CD4-positive, alpha-beta memory T cell (primary cell): ENCODE measurements at regions of chr14 and their contacts with region 1.

Region 1: GRCh38 chr14:76050797-76051392 is 65.3 kb downstream of the IFT43 start:
- DNase-seq: peak in 4 of 5 donors; percentile 36 to 56 (median 49)
- H3K4me3 ChIP-seq: no peak overlapping the region
- H3K4me3 Mint-ChIP-seq: no peak overlapping the region
- H3K27ac ChIP-seq: no peak overlapping the region
- H3K27ac Mint-ChIP-seq: no peak overlapping the region
- H3K4me1 ChIP-seq: no peaks in the 10 kb centered on the region
- H3K4me1 Mint-ChIP-seq: peaks cover 0 to 2% (median 0%) of the 10 kb centered on the region in 4 donors
- H3K27me3 ChIP-seq: no peaks in the 10 kb centered on the region
- H3K27me3 Mint-ChIP-seq: no peaks in the 10 kb centered on the region

Region 2: DNA sequence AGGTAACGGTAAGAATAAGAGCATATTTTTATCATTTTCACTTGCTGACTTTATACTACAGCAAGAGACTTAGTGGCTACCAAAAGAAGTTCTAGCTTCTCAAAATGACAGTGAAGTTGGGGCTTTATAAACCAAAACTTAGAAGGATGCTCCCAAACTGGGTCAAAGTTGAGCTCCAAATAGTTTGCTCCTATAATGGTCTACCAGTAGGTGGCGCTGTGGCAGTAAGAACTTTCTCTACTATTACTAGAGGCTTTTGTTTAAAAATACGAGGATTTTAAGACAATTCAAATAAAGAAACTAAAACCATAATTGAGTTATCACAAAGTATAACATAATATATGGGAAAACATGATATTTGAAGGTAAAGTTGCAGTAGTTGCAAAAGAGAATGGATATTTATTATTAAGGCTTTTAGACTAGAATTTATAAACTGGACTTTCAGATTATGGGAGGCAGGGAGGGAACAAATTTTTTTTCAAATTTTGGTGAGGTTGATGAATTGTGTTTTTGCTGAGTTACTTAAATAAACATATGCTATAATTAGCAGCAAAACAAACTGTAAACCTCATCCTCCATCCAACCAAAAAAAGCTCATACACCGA is 144.1 kb before region 1 on chr14:
- CTCF ChIA-PET with region 1: no interaction called
- POLR2A ChIA-PET with region 1: no interaction called
- intact Hi-C with region 1: loop called (anchors 5 kb)
- DNase-seq: peak; percentile 48 to 64 (median 54)
- H3K4me3 ChIP-seq: no peak overlapping the region
- H3K4me3 Mint-ChIP-seq: no peak overlapping the region
- H3K27ac ChIP-seq: no peak overlapping the region
- H3K27ac Mint-ChIP-seq: peak overlapping the region in 2 of 7 donors; percentile 3 to 15
- H3K4me1 ChIP-seq: no peaks in the 10 kb centered on the region
- H3K4me1 Mint-ChIP-seq: no peaks in the 10 kb centered on the region
- H3K27me3 ChIP-seq: no peaks in the 10 kb centered on the region
- H3K27me3 Mint-ChIP-seq: no peaks in the 10 kb centered on the region

Region 3: DNA sequence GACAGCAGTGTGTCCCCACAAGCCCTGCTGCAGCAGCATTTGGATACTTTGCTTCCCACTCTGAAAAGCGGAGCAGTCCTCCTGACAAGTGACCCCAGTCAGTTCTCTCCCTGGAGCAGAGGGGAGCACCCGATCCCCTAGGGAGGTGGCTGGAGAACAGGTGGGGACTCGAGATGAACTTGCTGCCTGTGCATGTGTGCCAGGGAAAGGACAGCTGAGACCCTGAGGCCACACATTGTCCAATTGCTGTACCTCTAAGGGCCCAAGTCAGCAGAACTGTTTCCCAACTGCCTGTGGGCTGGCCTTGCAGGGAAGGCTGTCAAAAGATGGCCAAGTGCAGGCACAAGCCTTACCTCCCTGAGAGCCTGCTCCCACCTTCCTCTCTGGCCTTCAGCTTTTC is 10.2 kb before region 1 on chr14:
- CTCF ChIA-PET with region 1: interaction called, 10 read pairs
- POLR2A ChIA-PET with region 1: no interaction called
- intact Hi-C with region 1: no loop called
- DNase-seq: no peak
- H3K4me3 ChIP-seq: no peak overlapping the region
- H3K4me3 Mint-ChIP-seq: no peak overlapping the region
- H3K27ac ChIP-seq: no peak overlapping the region
- H3K27ac Mint-ChIP-seq: no peak overlapping the region
- H3K4me1 ChIP-seq: no peaks in the 10 kb centered on the region
- H3K4me1 Mint-ChIP-seq: no peaks in the 10 kb centered on the region
- H3K27me3 ChIP-seq: no peaks in the 10 kb centered on the region
- H3K27me3 Mint-ChIP-seq: no peaks in the 10 kb centered on the region

Region 4: GRCh38 chr14:76181546-76181945 is 130.7 kb after region 1 on chr14:
- CTCF ChIA-PET with region 1: interaction called, 10 read pairs
- POLR2A ChIA-PET with region 1: no interaction called
- intact Hi-C with region 1: no loop called
- DNase-seq: peak in 1 of 5 donors; percentile 2
- H3K4me3 ChIP-seq: no peak overlapping the region
- H3K4me3 Mint-ChIP-seq: no peak overlapping the region
- H3K27ac ChIP-seq: no peak overlapping the region
- H3K27ac Mint-ChIP-seq: no peak overlapping the region
- H3K4me1 ChIP-seq: no peaks in the 10 kb centered on the region
- H3K4me1 Mint-ChIP-seq: peaks cover 7 to 13% (median 8%) of the 10 kb centered on the region in 4 donors
- H3K27me3 ChIP-seq: no peaks in the 10 kb centered on the region
- H3K27me3 Mint-ChIP-seq: no peaks in the 10 kb centered on the region

Region 5: GRCh38 chr14:76352639-76353281 is 301.9 kb after region 1 on chr14:
- CTCF ChIA-PET with region 1: interaction called, 165 read pairs
- POLR2A ChIA-PET with region 1: interaction called, 3 read pairs
- intact Hi-C with region 1: no loop called
- DNase-seq: peak in 4 of 5 donors; percentile 13 to 41 (median 28)
- H3K4me3 ChIP-seq: no peak overlapping the region
- H3K4me3 Mint-ChIP-seq: peak overlapping the region in 3 of 8 donors; percentile 51 to 66 (median 57)
- H3K27ac ChIP-seq: no peak overlapping the region
- H3K27ac Mint-ChIP-seq: no peak overlapping the region
- H3K4me1 ChIP-seq: peaks cover 5% of the 10 kb centered on the region
- H3K4me1 Mint-ChIP-seq: peaks cover 0 to 14% (median 4%) of the 10 kb centered on the region in 4 donors
- H3K27me3 ChIP-seq: no peaks in the 10 kb centered on the region
- H3K27me3 Mint-ChIP-seq: peaks cover 20 to 37% of the 10 kb centered on the region in 2 donors

Region 6: GRCh38 chr14:76386915-76387782 is 336.3 kb after region 1 on chr14:
- CTCF ChIA-PET with region 1: interaction called, 13 read pairs
- POLR2A ChIA-PET with region 1: no interaction called
- intact Hi-C with region 1: no loop called
- DNase-seq: peak in 4 of 5 donors; percentile 17 to 38 (median 30)
- H3K4me3 ChIP-seq: no peak overlapping the region
- H3K4me3 Mint-ChIP-seq: no peak overlapping the region
- H3K27ac ChIP-seq: no peak overlapping the region
- H3K27ac Mint-ChIP-seq: no peak overlapping the region
- H3K4me1 ChIP-seq: no peaks in the 10 kb centered on the region
- H3K4me1 Mint-ChIP-seq: no peaks in the 10 kb centered on the region
- H3K27me3 ChIP-seq: no peaks in the 10 kb centered on the region
- H3K27me3 Mint-ChIP-seq: peaks cover 40% of the 10 kb centered on the region in 2 donors

Region 7: DNA sequence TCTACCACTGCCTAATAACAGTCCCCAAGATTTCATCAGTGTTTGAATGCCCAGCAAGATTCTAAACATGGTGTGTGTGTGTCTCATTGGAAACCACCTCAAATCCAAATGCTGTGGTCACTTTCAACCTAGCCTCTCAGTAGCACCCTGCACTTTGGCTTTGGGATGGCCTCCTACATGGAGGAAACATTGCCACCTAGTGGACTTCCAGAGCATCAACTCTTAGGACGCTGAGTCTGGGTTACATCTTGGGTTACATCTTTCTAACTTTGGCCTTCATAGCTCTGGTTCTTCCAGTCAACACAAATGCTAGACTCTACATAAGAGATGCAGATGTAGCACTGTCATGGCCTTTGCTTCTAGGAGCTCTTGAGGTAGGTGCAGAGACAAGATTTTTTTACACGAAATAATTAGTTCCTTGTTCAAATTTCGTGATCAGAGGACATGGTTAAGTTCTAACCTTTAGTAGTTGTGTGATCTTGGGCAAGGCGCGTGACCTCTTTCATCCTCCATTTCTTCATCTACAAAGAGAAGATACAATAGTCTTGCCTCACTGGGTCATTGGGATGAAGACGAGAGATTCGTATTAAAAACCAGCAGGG is 596.9 kb after region 1 on chr14:
- CTCF ChIA-PET with region 1: interaction called, 16 read pairs
- POLR2A ChIA-PET with region 1: no interaction called
- intact Hi-C with region 1: no loop called
- DNase-seq: peak in 4 of 5 donors; percentile 6 to 34 (median 12)
- H3K4me3 ChIP-seq: no peak overlapping the region
- H3K4me3 Mint-ChIP-seq: no peak overlapping the region
- H3K27ac ChIP-seq: no peak overlapping the region
- H3K27ac Mint-ChIP-seq: no peak overlapping the region
- H3K4me1 ChIP-seq: no peaks in the 10 kb centered on the region
- H3K4me1 Mint-ChIP-seq: no peaks in the 10 kb centered on the region
- H3K27me3 ChIP-seq: peaks cover 3% of the 10 kb centered on the region
- H3K27me3 Mint-ChIP-seq: peaks cover 5 to 11% of the 10 kb centered on the region in 2 donors